ENCODE measurements at regions of chr19 and their contacts with region 1.

Region 1: GRCh38 chr19:7943444-7944176 is at the start of gene TIMM44:
- DNase-seq: peak; percentile 86 to 98
- ATAC-seq: peak; percentile 98 to 99
- H3K4me3 ChIP-seq: peak within 1 kb of the TSS; percentile 92
- H3K27ac ChIP-seq: peak within 1 kb of the TSS; percentile 99 to 100
- H3K4me1 ChIP-seq: peaks cover 8% of the 10 kb centered on the region; the same call in 1 of the 3 replicates
- CTCF ChIP-seq: no peak
- EP300 ChIP-seq: no peak
- POLR2A ChIP-seq: peak; percentile 88
- RAD21 ChIP-seq: no peak
- polyA plus RNA-seq, gene TIMM44: 23.0 and 53.2 TPM in 2 replicates

Region 2: GRCh38 chr19:7888145-7888825 is 55.3 kb before region 1 on chr19 and contains the start of gene LRRC8E:
- CTCF ChIA-PET with region 1: no interaction called
- POLR2A ChIA-PET with region 1: no interaction called
- DNase-seq: peak; percentile 50 to 62
- ATAC-seq: peak; percentile 96 to 98
- H3K4me3 ChIP-seq: peak within 1 kb of the TSS; percentile 71
- H3K27ac ChIP-seq: peak within 1 kb of the TSS; percentile 83 to 93
- H3K4me1 ChIP-seq: no peaks in the 10 kb centered on the region
- CTCF ChIP-seq: no peak
- EP300 ChIP-seq: no peak
- POLR2A ChIP-seq: peak; percentile 67
- RAD21 ChIP-seq: no peak
- polyA plus RNA-seq, gene LRRC8E: 4.0 and 5.3 TPM in 2 replicates

Region 3: GRCh38 chr19:7919610-7920518 is 23.7 kb before region 1 on chr19 and contains the start of gene SNAPC2:
- CTCF ChIA-PET with region 1: interaction called, 9 read pairs
- POLR2A ChIA-PET with region 1: interaction called, 12 read pairs
- DNase-seq: peak; percentile 60 to 94
- ATAC-seq: peak; percentile 27 to 71
- H3K4me3 ChIP-seq: peak within 1 kb of the TSS; percentile 72
- H3K27ac ChIP-seq: peak within 1 kb of the TSS; percentile 95 to 96
- H3K4me1 ChIP-seq: peaks cover 19% of the 10 kb centered on the region
- CTCF ChIP-seq: no peak
- EP300 ChIP-seq: no peak
- POLR2A ChIP-seq: peak; percentile 51
- RAD21 ChIP-seq: no peak
- polyA plus RNA-seq, gene SNAPC2: 8.8 and 9.2 TPM in 2 replicates

Region 4: DNA sequence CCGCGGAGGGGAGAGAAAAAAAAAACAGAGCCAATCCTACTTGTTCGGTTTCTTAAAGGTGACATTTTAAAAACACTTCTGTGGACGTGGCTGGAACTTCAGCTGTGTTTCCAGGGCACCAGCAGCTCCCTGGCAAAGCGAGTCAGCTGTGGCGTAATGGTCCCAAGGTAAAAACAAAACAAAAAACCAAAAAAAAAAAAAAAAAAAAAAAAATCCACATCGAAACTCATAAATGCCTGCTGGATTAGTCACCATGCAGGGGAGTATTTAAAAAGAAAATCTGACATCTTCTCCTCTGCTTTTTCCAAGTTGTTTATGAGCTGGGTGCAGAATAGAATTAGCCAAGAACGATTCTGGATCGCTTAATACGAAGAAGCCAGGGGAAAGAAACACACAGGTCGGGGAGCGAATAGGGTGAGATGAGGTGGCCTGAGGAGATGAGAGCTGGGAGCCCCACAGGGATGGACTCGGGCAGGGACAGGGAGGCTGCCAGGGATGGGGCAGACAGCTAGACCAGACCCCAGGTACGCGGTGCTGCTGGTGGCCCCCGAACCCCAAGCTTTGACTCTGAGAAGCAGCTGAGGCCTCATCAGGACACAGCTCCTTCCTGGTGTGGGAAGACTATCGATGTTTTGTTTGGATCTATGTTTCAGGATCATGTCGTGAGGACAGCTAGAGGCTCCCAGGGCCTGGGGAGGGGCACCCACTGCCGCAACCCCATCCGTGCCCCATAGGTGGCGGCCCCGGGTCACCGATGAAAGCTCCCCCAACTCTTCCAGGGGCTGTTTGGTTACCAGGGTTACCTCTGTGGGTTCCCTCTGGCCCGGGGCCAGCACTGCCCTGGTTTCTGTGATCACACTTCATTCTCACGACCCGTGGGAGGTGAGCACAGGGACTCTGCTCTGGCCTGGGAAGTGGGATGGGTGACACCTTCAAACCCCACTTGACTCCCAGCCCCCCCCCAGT is 14.6 kb before region 1 on chr19:
- CTCF ChIA-PET with region 1: interaction called, 56 read pairs
- POLR2A ChIA-PET with region 1: interaction called, 20 read pairs
- DNase-seq: peak; percentile 40 to 43
- ATAC-seq: peak; percentile 10 to 59; a peak in 4 of 6 replicates
- H3K4me3 ChIP-seq: no peak overlapping the region
- H3K27ac ChIP-seq: peak overlapping the region in 1 of 2 experiments; percentile 25; a peak in 2 of 6 replicates
- H3K4me1 ChIP-seq: peaks cover 22% of the 10 kb centered on the region
- CTCF ChIP-seq: no peak
- EP300 ChIP-seq: no peak
- POLR2A ChIP-seq: no peak
- RAD21 ChIP-seq: peak in 1 of 2 experiments; percentile 23; a peak in 2 of 5 replicates

Region 5: GRCh38 chr19:7959211-7959610 is 15.6 kb after region 1 on chr19:
- CTCF ChIA-PET with region 1: interaction called, 20 read pairs
- POLR2A ChIA-PET with region 1: no interaction called
- DNase-seq: no peak
- ATAC-seq: no peak
- H3K4me3 ChIP-seq: no peak overlapping the region
- H3K27ac ChIP-seq: no peak overlapping the region
- H3K4me1 ChIP-seq: peaks cover 12% of the 10 kb centered on the region; the same call in 2 of the 3 replicates
- CTCF ChIP-seq: no peak
- EP300 ChIP-seq: no peak
- POLR2A ChIP-seq: no peak
- RAD21 ChIP-seq: no peak

Region 6: GRCh38 chr19:7970716-7971448 is 27.3 kb after region 1 on chr19:
- CTCF ChIA-PET with region 1: interaction called, 26 read pairs
- POLR2A ChIA-PET with region 1: interaction called, 5 read pairs
- DNase-seq: peak; percentile 37 to 39
- ATAC-seq: peak; percentile 86 to 87
- H3K4me3 ChIP-seq: no peak overlapping the region
- H3K27ac ChIP-seq: no peak overlapping the region
- H3K4me1 ChIP-seq: no peaks in the 10 kb centered on the region
- CTCF ChIP-seq: peak; percentile 65
- EP300 ChIP-seq: no peak
- POLR2A ChIP-seq: no peak
- RAD21 ChIP-seq: peak; percentile 67 to 74

Region 7: DNA sequence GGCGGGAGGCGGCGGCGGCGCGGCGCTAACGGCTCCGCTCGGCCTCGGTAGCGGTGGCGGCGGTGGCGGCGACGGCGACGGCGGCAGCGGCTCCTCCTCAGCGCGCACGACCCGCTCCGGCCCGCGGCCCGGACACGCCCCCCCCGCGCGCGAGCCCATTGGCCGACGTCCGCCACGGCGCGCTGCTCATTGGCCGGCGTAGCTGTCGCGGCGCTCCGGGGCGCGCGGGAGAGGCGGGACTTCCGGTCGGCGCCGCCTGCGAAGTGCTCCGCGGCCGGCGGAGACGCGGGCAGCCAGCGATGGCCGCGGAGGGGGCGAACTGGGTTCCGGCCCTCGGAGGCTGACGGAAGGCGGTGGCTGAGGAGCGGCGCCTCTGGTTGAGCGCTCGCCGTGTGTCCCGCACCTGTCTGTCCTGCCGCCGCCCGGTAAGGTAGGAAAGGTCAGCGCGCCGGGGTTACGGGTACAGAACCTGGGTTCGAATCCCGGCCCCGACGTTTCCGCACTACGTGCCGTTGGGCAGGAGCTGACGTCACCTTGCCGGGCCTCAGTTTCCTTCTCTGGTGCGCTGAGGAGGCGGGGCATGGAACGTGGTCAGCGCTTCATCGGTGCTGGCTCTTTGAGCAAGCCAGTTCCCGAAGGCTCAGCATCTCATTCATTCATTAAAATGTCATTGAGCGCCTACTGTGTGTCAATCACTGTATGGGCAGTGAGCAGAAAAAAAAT is 62.1 kb after region 1 on chr19 and contains the start of gene ELAVL1:
- CTCF ChIA-PET with region 1: interaction called, 28 read pairs
- POLR2A ChIA-PET with region 1: interaction called, 15 read pairs
- DNase-seq: peak; percentile 64 to 88
- ATAC-seq: peak; percentile 87 to 90
- H3K4me3 ChIP-seq: peak within 1 kb of the TSS; percentile 58
- H3K27ac ChIP-seq: peak within 1 kb of the TSS; percentile 89 to 99
- H3K4me1 ChIP-seq: peaks cover 19% of the 10 kb centered on the region
- CTCF ChIP-seq: no peak
- EP300 ChIP-seq: no peak
- POLR2A ChIP-seq: peak; percentile 81
- RAD21 ChIP-seq: no peak
- polyA plus RNA-seq, gene ELAVL1: 39.3 and 44.4 TPM in 2 replicates

Region 8: GRCh38 chr19:8252922-8253589 is 309.4 kb after region 1 on chr19:
- CTCF ChIA-PET with region 1: interaction called, 64 read pairs
- POLR2A ChIA-PET with region 1: interaction called, 6 read pairs
- DNase-seq: peak; percentile 68 to 74
- ATAC-seq: peak; percentile 87 to 93
- H3K4me3 ChIP-seq: no peak overlapping the region
- H3K27ac ChIP-seq: no peak overlapping the region
- H3K4me1 ChIP-seq: no peaks in the 10 kb centered on the region
- CTCF ChIP-seq: peak; percentile 80
- EP300 ChIP-seq: no peak
- POLR2A ChIP-seq: no peak
- RAD21 ChIP-seq: peak; percentile 94 to 95

Measured in A549 (cell line).